Gastrocnemius medialis (tissue), 4 donors: ENCODE measurements at regions of chr2 and their contacts with region 1.

Region 1: GRCh38 chr2:55961318-55961911 is 37.8 kb upstream of the EFEMP1 start:
- DNase-seq: no peak
- ATAC-seq: no peak
- H3K4me3 ChIP-seq: no peak overlapping the region
- H3K27ac ChIP-seq: no peak overlapping the region
- H3K4me1 ChIP-seq: no peaks in the 10 kb centered on the region
- H3K27me3 ChIP-seq: no peaks in the 10 kb centered on the region
- CTCF ChIP-seq: peak in 3 of 5 experiments; percentile 17 to 51 (median 33)
- POLR2A ChIP-seq: no peak

Region 2: GRCh38 chr2:55771612-55772011 is 189.8 kb before region 1 on chr2:
- in situ Hi-C with region 1: loop called in 3 of 4 experiments (anchors 25 kb)
- intact Hi-C with region 1: loop called (anchors 5 kb)
- DNase-seq: no peak
- ATAC-seq: no peak
- H3K4me3 ChIP-seq: no peak overlapping the region
- H3K27ac ChIP-seq: no peak overlapping the region
- H3K4me1 ChIP-seq: no peaks in the 10 kb centered on the region
- H3K27me3 ChIP-seq: no peaks in the 10 kb centered on the region
- CTCF ChIP-seq: peak in 4 of 5 experiments; percentile 15 to 40 (median 23)
- POLR2A ChIP-seq: no peak

Region 3: GRCh38 chr2:55779459-55780421 is 181.7 kb before region 1 on chr2:
- in situ Hi-C with region 1: loop called in 3 of 4 experiments (anchors 25 kb)
- intact Hi-C with region 1: loop called (anchors 5 kb)
- DNase-seq: no peak
- ATAC-seq: no peak
- H3K4me3 ChIP-seq: no peak overlapping the region
- H3K27ac ChIP-seq: no peak overlapping the region
- H3K4me1 ChIP-seq: no peaks in the 10 kb centered on the region
- H3K27me3 ChIP-seq: no peaks in the 10 kb centered on the region
- CTCF ChIP-seq: no peak
- POLR2A ChIP-seq: no peak

Region 4: DNA sequence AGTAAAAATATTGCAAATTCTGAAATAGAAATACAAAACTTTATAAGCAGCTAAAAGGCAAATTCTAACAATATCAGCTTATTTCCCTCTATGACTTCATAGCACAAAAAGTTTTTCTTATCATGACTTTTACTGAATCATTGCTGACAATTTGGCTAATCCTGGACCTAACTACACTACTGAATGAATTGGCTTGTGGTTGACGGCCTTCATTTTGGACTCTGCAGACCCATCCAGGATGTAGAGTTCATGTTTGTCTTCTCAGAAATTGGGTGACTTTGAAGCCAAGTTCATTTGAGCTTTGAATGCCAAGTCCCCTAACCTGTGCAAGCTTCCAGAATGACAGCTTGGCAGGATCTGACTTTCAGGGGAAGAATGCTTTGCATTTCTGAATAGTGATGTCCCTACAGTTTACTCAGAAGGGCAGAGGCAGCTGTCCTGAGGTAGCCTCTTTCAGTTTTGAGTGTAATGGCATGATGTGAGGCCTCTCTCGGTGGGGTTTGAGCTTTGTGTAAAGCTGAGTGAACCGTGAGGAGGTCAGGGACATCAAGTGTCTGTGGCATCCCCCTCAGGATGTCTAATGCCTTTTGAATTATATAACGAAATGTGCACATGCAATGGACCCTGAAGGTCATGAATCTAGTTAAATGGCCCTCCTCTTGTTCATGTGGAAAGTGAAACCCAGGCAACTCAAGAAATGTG is 85.8 kb before region 1 on chr2:
- in situ Hi-C with region 1: no loop called
- intact Hi-C with region 1: no loop called
- DNase-seq: no peak
- ATAC-seq: no peak
- H3K4me3 ChIP-seq: no peak overlapping the region
- H3K27ac ChIP-seq: no peak overlapping the region
- H3K4me1 ChIP-seq: no peaks in the 10 kb centered on the region
- H3K27me3 ChIP-seq: no peaks in the 10 kb centered on the region
- CTCF ChIP-seq: no peak
- POLR2A ChIP-seq: no peak

Region 5: GRCh38 chr2:56177420-56178220 is 216.2 kb after region 1 on chr2:
- in situ Hi-C with region 1: no loop called
- intact Hi-C with region 1: no loop called
- DNase-seq: no peak
- ATAC-seq: no peak
- H3K4me3 ChIP-seq: no peak overlapping the region
- H3K27ac ChIP-seq: no peak overlapping the region
- H3K4me1 ChIP-seq: no peaks in the 10 kb centered on the region
- H3K27me3 ChIP-seq: peaks cover 0 to 3% (median 0%) of the 10 kb centered on the region in 3 donors
- CTCF ChIP-seq: no peak
- POLR2A ChIP-seq: no peak

Region 6: DNA sequence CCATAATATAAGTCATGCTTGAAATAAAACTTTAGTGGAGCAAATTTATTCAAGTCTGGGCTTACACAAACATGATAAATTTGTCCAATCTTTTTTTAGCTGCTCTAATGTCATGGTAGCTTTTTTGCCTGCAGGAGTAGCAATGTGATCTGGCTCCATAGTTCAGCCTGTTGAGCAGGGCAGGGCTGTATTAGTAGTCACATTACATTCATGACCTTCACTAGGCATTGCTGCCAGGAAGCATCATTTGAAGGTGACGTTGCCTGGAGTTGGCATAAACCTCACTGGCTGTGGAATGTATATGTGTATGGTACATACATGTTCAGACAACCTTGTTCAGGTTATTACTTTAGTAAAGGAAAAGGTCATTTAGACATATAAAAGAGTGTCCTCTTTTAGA is 299.0 kb after region 1 on chr2:
- in situ Hi-C with region 1: no loop called
- intact Hi-C with region 1: no loop called
- DNase-seq: no peak
- ATAC-seq: peak in 1 of 2 donors; percentile 30
- H3K4me3 ChIP-seq: no peak overlapping the region
- H3K27ac ChIP-seq: no peak overlapping the region
- H3K4me1 ChIP-seq: peaks cover 19% of the 10 kb centered on the region in 2 donors
- H3K27me3 ChIP-seq: no peaks in the 10 kb centered on the region
- CTCF ChIP-seq: no peak
- POLR2A ChIP-seq: no peak

Region 7: GRCh38 chr2:56271275-56271674 is 309.9 kb after region 1 on chr2:
- in situ Hi-C with region 1: no loop called
- intact Hi-C with region 1: no loop called
- DNase-seq: no peak
- ATAC-seq: no peak
- H3K4me3 ChIP-seq: no peak overlapping the region
- H3K27ac ChIP-seq: no peak overlapping the region
- H3K4me1 ChIP-seq: no peaks in the 10 kb centered on the region
- H3K27me3 ChIP-seq: no peaks in the 10 kb centered on the region
- CTCF ChIP-seq: no peak
- POLR2A ChIP-seq: no peak